ENCODE measurements at regions of chr11 and their contacts with region 1.

Region 1: GRCh38 chr11:3220521-3221407 is 2.2 kb upstream of the MRGPRG start:
- DNase-seq: peak in 9 of 42 donors; percentile 1 to 25 (median 8)

Region 2: GRCh38 chr11:2945031-2945756 is 275.6 kb before region 1 on chr11:
- intact Hi-C with region 1: no loop called
- DNase-seq: peak; percentile 76 to 95 (median 89)

Region 3: GRCh38 chr11:3037040-3037944 is 183.5 kb before region 1 on chr11:
- intact Hi-C with region 1: loop called (anchors 10 kb)
- DNase-seq: peak; percentile 77 to 96 (median 89)

Region 4: GRCh38 chr11:3109921-3110706 is 110.7 kb before region 1 on chr11:
- intact Hi-C with region 1: loop called (anchors 5 kb)
- DNase-seq: peak in 31 of 42 donors; percentile 10 to 66 (median 41)

Measured in head of caudate nucleus (tissue), 42 donors.